OCI-LY7 (cell line): ENCODE measurements at regions of chr12 and their contacts with region 1.

Region 1: GRCh38 chr12:56636675-56637540 is 6.8 kb upstream of the BAZ2A start:
- DNase-seq: peak; percentile 99
- H3K4me3 ChIP-seq: peak overlapping the region; percentile 76
- H3K27ac ChIP-seq: peak overlapping the region; percentile 92
- H3K4me1 ChIP-seq: peaks cover 53% of the 10 kb centered on the region
- CTCF ChIP-seq: peak; percentile 93

Region 2: DNA sequence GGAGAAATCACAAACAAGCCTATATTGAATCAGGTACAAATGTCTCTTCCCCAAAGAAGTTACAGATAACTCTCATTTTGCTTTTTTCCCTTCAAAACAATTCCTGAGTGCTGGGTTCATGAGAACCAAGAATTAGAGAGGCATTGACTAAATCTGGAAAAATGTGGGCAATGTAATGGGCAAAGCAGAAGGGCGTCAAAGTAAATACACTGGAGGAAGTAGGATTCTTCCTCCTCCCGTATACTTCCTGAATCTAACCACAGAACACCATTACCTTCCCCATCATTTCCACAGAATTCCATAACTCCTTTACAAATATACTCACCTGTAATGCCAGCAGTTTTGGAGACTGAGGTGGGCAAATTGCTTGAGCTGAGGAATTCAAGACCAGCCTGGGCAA is 118.3 kb before region 1 on chr12:
- CTCF ChIA-PET with region 1: interaction called, 7 read pairs
- POLR2A ChIA-PET with region 1: interaction called, 10 read pairs
- intact Hi-C with region 1: no loop called
- DNase-seq: no peak
- H3K4me3 ChIP-seq: no peak overlapping the region
- H3K27ac ChIP-seq: no peak overlapping the region
- H3K4me1 ChIP-seq: no peaks in the 10 kb centered on the region
- CTCF ChIP-seq: no peak

Region 3: GRCh38 chr12:56565510-56566101 is 71.3 kb before region 1 on chr12:
- CTCF ChIA-PET with region 1: no interaction called
- POLR2A ChIA-PET with region 1: no interaction called
- intact Hi-C with region 1: no loop called
- DNase-seq: peak; percentile 46
- H3K4me3 ChIP-seq: no peak overlapping the region
- H3K27ac ChIP-seq: no peak overlapping the region
- H3K4me1 ChIP-seq: peaks cover 10% of the 10 kb centered on the region
- CTCF ChIP-seq: no peak

Region 4: DNA sequence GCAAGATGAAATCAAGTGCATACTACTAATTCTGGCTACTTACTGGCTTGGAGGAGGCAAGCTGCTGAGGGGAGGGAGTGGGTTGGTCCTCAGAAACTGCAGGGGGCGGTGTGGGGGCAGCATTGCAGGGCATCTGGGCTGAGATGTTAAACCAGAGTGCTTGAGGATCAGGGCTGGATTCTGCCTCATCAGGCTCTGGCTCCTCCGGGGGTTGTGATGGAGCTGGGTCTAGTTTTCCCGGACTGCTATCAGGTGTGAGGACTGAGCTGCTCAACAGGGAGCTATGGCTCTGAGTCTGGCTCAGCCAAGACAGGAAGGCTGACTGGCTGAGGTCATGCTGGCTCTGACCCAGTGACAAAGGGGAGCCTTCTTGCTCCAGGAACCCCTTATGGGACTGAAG is 35.4 kb before region 1 on chr12:
- CTCF ChIA-PET with region 1: interaction called, 9 read pairs
- POLR2A ChIA-PET with region 1: interaction called, 8 read pairs
- intact Hi-C with region 1: loop called (anchors 1 kb)
- DNase-seq: peak; percentile 39
- H3K4me3 ChIP-seq: no peak overlapping the region
- H3K27ac ChIP-seq: no peak overlapping the region
- H3K4me1 ChIP-seq: no peaks in the 10 kb centered on the region
- CTCF ChIP-seq: peak; percentile 69

Region 5: DNA sequence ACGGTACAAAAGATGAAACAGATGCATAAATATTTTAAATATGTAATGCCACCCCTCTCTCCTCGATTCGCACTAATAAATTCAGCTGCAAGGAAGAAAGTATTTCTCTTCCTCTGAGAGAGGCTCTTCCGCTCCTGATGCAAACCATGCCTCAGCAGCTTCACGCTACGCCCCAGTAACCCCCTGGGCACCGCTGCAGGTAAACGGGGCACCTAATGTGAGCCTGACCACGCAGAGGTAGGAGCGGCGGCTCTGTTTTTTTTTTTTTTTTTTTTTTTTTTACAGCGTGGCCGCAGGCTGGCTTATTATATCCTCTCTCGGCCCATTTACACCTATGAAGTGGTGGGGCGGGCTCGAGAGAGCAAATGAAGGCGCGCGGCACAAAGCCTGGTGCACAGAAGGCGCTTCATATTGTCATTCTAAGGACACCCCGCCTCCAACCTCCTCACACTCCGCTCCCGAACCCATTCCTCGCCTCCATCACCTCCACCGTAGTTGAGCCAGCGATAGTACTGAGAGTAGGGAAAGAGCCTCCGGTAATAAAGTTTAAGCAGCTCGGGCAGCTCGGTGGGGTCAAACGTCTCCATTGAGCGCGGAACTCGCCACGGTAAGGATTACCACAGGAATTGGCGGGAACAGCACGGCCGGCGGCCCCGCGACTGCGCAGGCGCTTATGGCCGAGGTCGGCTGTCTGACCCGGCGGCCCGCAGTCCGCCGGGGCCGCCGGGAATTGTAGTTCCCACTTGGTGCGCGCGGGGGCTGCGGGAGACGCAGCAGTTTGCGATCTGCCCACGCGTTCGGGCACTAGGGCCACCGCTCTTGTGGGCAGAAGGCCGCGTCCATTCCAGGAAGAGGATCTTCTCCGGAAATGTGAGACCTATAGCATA is 115.0 kb after region 1 on chr12 and contains the start of gene PRIM1:
- CTCF ChIA-PET with region 1: no interaction called
- POLR2A ChIA-PET with region 1: no interaction called
- intact Hi-C with region 1: loop called (anchors 5 kb)
- DNase-seq: peak; percentile 94
- H3K4me3 ChIP-seq: peak within 1 kb of the TSS; percentile 76
- H3K27ac ChIP-seq: peak within 1 kb of the TSS; percentile 94
- H3K4me1 ChIP-seq: peaks cover 25% of the 10 kb centered on the region
- CTCF ChIP-seq: no peak
- total RNA-seq, gene PRIM1: 17.1 and 20.4 TPM in 2 replicates

Region 6: GRCh38 chr12:56877195-56878009 is 240.5 kb after region 1 on chr12:
- CTCF ChIA-PET with region 1: no interaction called
- POLR2A ChIA-PET with region 1: no interaction called
- intact Hi-C with region 1: no loop called
- DNase-seq: no peak
- H3K4me3 ChIP-seq: no peak overlapping the region
- H3K27ac ChIP-seq: no peak overlapping the region
- H3K4me1 ChIP-seq: no peaks in the 10 kb centered on the region
- CTCF ChIP-seq: no peak